ENCODE measurements at regions of chr17 and their contacts with region 1.

Region 1: GRCh38 chr17:34626141-34626681 is 46.8 kb downstream of the TMEM132E start:
- DNase-seq: peak; percentile 44
- ATAC-seq: peak; percentile 47
- H3K4me3 Mint-ChIP-seq: no peak overlapping the region
- H3K27ac Mint-ChIP-seq: no peak overlapping the region
- H3K4me1 Mint-ChIP-seq: peaks cover 24% of the 10 kb centered on the region
- H3K27me3 Mint-ChIP-seq: peaks cover 33% of the 10 kb centered on the region
- CTCF ChIP-seq: no peak

Region 2: DNA sequence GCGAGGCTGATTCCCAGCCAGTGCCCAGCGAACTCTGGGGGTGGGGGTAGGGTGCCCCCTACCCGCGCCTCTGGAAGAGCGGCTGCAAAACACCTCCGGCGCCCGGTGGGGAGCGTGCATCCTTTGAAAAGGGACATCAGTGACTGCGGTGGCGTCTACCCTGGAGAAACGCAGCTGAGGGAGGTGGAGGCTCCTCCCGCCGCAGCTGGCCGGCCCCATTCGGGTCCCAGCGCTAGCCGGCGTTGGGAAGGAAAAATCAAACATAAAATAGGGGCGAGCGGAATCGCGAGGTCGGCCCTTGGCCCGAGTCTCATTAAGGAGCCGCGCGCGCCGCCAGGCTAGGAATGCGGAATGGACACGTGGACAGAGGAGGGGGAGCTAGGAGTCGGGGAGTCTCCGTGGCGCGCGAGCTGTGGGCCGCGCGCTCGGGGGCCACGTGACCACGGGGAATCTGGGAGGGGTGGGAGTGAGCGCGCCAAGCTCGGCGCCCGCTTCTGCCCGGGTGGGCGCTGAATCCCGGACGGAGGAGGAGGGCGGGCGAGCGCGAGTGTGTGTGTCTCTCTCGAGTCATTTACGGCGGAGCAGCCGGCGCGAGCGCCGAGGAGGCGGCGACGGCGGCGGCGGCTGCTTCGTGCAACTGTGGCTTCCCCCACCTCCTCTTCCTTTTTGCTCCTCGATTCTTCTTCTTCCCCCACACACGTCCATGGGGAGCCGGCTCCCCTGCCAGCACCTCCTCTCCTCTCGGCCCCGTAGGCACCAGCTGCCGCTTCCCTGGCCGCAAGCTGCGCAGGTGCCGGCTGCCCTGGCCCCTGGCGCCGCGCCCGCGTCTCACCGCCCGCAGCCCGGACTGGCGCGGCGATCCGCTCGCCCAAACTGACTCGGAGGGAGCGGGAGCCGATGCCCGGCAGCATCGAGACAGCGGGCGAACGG is 46.9 kb before region 1 on chr17 and contains the start of gene TMEM132E:
- CTCF ChIA-PET with region 1: interaction called, 11 read pairs
- POLR2A ChIA-PET with region 1: no interaction called
- DNase-seq: peak; percentile 68
- ATAC-seq: peak; percentile 7
- H3K4me3 Mint-ChIP-seq: peak within 1 kb of the TSS; percentile 84
- H3K27ac Mint-ChIP-seq: no peak within 1 kb of the TSS
- H3K4me1 Mint-ChIP-seq: peaks cover 36% of the 10 kb centered on the region
- H3K27me3 Mint-ChIP-seq: peaks cover 99% of the 10 kb centered on the region
- CTCF ChIP-seq: no peak
- total RNA-seq, gene TMEM132E: 1.2 to 2.3 TPM (median 2.0 TPM) in 3 replicates